ENCODE measurements at regions of chr13 and their contacts with region 1.

Region 1: DNA sequence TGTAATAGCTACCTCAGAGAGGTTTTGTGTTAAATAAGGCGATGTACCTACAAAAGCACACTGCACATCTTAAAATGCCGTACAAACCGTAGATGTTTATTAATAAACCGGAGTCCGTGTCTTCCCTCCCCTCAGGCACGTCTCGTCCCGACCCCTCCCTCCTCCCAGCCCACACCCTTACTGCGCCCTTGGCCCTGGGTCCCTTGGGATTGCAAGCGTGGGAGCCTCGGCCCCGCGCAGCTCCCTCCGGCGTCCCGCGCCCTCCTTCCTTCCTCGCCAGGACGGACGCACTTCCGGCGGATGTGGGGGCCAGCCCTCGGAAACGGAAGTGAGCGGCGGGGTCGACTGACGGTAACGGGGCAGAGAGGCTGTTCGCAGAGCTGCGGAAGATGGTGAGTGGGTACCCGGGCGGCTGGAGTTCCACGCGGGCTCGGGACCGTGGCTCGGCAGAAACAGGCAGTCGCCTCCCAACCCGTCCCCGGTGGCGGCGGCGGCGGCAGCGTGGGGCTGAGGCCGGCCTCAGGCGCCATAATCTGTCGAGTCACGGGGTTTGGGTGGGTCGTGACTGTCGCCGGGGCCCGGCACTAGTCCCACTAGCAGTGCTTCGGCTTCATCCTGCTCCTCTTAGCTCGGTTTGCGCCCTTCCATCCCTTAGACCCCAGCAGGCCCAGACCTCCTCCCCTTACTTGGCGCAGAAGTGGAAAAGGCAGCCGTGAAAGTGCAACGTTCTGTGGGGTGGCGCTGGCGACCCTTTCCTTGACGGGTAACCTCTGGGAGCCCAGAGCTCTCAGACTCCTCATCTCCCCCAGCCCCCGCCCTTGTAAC is at the start of gene POMP:
- DNase-seq: peak; percentile 90 to 94 (median 93)
- H3K4me3 ChIP-seq: peak within 1 kb of the TSS; percentile 76 to 93
- H3K4me3 Mint-ChIP-seq: peak within 1 kb of the TSS; percentile 95 to 99 (median 98)
- H3K27ac ChIP-seq: peak within 1 kb of the TSS; percentile 95
- H3K27ac Mint-ChIP-seq: peak within 1 kb of the TSS; percentile 96 to 100 (median 98)
- H3K4me1 ChIP-seq: peaks cover 40% of the 10 kb centered on the region
- H3K4me1 Mint-ChIP-seq: peaks cover 34 to 63% (median 54%) of the 10 kb centered on the region in 4 donors
- H3K27me3 ChIP-seq: no peaks in the 10 kb centered on the region
- H3K27me3 Mint-ChIP-seq: no peaks in the 10 kb centered on the region
- total RNA-seq, gene POMP: 23.0 to 24.5 TPM

Region 2: GRCh38 chr13:27251166-27252091 is 1407.6 kb before region 1 on chr13 and contains the start of gene RPL21:
- CTCF ChIA-PET with region 1: no interaction called
- POLR2A ChIA-PET with region 1: no interaction called
- intact Hi-C with region 1: loop called (anchors 1 kb)
- DNase-seq: peak; percentile 92 to 95 (median 93)
- H3K4me3 ChIP-seq: peak within 1 kb of the TSS; percentile 84 to 98
- H3K4me3 Mint-ChIP-seq: peak within 1 kb of the TSS; percentile 93 to 99 (median 96)
- H3K27ac ChIP-seq: peak within 1 kb of the TSS; percentile 99
- H3K27ac Mint-ChIP-seq: peak within 1 kb of the TSS; percentile 98 to 100 (median 100)
- H3K4me1 ChIP-seq: peaks cover 44% of the 10 kb centered on the region
- H3K4me1 Mint-ChIP-seq: peaks cover 34 to 74% (median 54%) of the 10 kb centered on the region in 4 donors
- H3K27me3 ChIP-seq: no peaks in the 10 kb centered on the region
- H3K27me3 Mint-ChIP-seq: no peaks in the 10 kb centered on the region
- total RNA-seq, gene RPL21: 2,008 to 2,177 TPM

Region 3: DNA sequence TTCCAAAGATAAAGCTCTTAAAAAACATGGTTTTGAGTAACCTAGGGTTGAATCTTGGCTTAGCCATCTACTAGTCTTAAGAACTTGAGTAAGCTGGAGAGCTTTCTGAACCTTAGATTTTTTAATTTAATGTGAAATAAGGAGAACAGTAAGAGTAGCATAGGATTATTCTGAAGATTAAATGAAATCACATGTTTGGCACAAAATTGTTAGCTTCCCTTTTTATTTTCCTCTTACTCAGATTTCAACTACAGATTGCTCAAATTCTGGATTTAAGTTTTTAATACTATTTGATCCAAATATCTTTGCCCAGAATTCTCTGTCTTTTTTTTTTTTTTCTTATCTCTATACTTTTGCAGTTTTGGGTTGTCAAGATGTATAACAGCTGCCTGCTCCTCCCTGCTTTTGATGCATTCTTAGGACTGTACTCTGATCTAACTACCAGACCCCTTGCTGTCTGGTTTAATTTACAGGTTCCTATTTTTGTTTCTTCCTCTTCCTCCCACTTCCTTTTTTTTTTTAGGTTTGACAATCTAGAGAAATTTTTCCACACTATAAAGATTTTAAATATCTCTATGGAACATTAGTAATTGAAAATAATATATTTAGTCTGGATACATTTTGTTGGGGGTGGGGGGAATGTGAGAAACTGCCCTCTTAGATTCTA is 12.3 kb after region 1 on chr13:
- CTCF ChIA-PET with region 1: interaction called, 3 read pairs
- POLR2A ChIA-PET with region 1: interaction called, 20 read pairs
- intact Hi-C with region 1: no loop called
- DNase-seq: no peak
- H3K4me3 ChIP-seq: no peak overlapping the region
- H3K4me3 Mint-ChIP-seq: no peak overlapping the region
- H3K27ac ChIP-seq: no peak overlapping the region
- H3K27ac Mint-ChIP-seq: peak overlapping the region in 5 of 7 donors; percentile 22 to 90 (median 77)
- H3K4me1 ChIP-seq: no peaks in the 10 kb centered on the region
- H3K4me1 Mint-ChIP-seq: peaks cover 4 to 9% (median 7%) of the 10 kb centered on the region in 4 donors
- H3K27me3 ChIP-seq: no peaks in the 10 kb centered on the region
- H3K27me3 Mint-ChIP-seq: no peaks in the 10 kb centered on the region

Region 4: GRCh38 chr13:28718543-28719226 is 59.7 kb after region 1 on chr13 and contains the start of gene SLC46A3:
- CTCF ChIA-PET with region 1: interaction called, 5 read pairs
- POLR2A ChIA-PET with region 1: interaction called, 41 read pairs
- intact Hi-C with region 1: loop called (anchors 1 kb)
- DNase-seq: peak; percentile 95 to 97 (median 96)
- H3K4me3 ChIP-seq: peak within 1 kb of the TSS; percentile 15 to 86
- H3K4me3 Mint-ChIP-seq: peak within 1 kb of the TSS; percentile 92 to 97 (median 94)
- H3K27ac ChIP-seq: peak within 1 kb of the TSS; percentile 65
- H3K27ac Mint-ChIP-seq: peak within 1 kb of the TSS; percentile 90 to 98 (median 95)
- H3K4me1 ChIP-seq: peaks cover 29% of the 10 kb centered on the region
- H3K4me1 Mint-ChIP-seq: peaks cover 23 to 47% (median 31%) of the 10 kb centered on the region in 4 donors
- H3K27me3 ChIP-seq: no peaks in the 10 kb centered on the region
- H3K27me3 Mint-ChIP-seq: no peaks in the 10 kb centered on the region
- total RNA-seq, gene SLC46A3: 18.7 to 18.9 TPM

Region 5: GRCh38 chr13:28792992-28793391 is 134.0 kb after region 1 on chr13:
- CTCF ChIA-PET with region 1: no interaction called
- POLR2A ChIA-PET with region 1: no interaction called
- intact Hi-C with region 1: loop called (anchors 10 kb)
- DNase-seq: no peak
- H3K4me3 ChIP-seq: no peak overlapping the region
- H3K4me3 Mint-ChIP-seq: no peak overlapping the region
- H3K27ac ChIP-seq: no peak overlapping the region
- H3K27ac Mint-ChIP-seq: no peak overlapping the region
- H3K4me1 ChIP-seq: no peaks in the 10 kb centered on the region
- H3K4me1 Mint-ChIP-seq: peaks cover 0 to 4% (median 0%) of the 10 kb centered on the region in 4 donors
- H3K27me3 ChIP-seq: no peaks in the 10 kb centered on the region
- H3K27me3 Mint-ChIP-seq: peaks cover 7 to 20% of the 10 kb centered on the region in 2 donors

Region 6: DNA sequence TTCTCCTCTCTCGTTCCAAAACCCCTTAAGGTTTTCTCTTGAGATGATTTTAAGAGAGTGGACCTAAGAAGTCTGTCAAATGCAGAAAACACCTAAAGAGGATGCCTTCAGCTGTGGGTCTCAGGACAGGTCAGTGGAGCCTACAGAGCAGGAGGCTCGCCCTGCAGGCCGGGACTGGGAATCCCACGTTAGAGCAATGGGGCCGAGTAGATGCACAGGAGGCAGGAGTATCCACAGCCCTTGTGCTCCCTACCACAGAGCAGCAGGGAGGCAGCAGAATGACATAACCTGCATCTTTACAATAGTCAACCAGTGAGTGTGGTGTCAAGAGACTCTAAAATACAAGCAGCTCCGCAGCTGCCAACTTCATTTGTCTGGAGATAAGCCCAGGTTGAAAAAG is 390.5 kb after region 1 on chr13:
- CTCF ChIA-PET with region 1: no interaction called
- POLR2A ChIA-PET with region 1: no interaction called
- intact Hi-C with region 1: no loop called
- DNase-seq: no peak
- H3K4me3 ChIP-seq: no peak overlapping the region
- H3K4me3 Mint-ChIP-seq: no peak overlapping the region
- H3K27ac ChIP-seq: no peak overlapping the region
- H3K27ac Mint-ChIP-seq: no peak overlapping the region
- H3K4me1 ChIP-seq: no peaks in the 10 kb centered on the region
- H3K4me1 Mint-ChIP-seq: no peaks in the 10 kb centered on the region
- H3K27me3 ChIP-seq: no peaks in the 10 kb centered on the region
- H3K27me3 Mint-ChIP-seq: no peaks in the 10 kb centered on the region

Region 7: DNA sequence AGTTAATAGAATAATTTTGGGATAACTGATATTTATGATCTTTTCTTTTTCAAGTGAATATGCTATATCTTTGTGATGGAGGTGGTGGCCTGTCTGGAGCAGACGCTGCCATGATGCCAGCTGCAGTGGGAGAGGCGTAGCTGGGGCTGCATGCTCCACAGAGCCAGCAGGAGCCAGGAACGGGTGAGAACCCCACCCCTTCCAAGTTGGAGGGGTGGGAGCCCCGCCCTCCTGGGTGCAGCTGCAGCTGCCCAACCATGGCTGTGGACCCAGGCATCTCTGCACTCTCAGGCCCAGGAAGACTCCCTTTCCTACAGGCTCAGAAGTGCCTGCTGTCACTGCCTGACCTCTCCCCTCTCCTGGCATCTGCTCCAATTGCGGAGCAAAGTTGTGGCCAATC is 563.5 kb after region 1 on chr13:
- CTCF ChIA-PET with region 1: no interaction called
- POLR2A ChIA-PET with region 1: no interaction called
- intact Hi-C with region 1: no loop called
- DNase-seq: no peak
- H3K4me3 ChIP-seq: no peak overlapping the region
- H3K4me3 Mint-ChIP-seq: no peak overlapping the region
- H3K27ac ChIP-seq: no peak overlapping the region
- H3K27ac Mint-ChIP-seq: no peak overlapping the region
- H3K4me1 ChIP-seq: no peaks in the 10 kb centered on the region
- H3K4me1 Mint-ChIP-seq: no peaks in the 10 kb centered on the region
- H3K27me3 ChIP-seq: no peaks in the 10 kb centered on the region
- H3K27me3 Mint-ChIP-seq: peaks cover 0 to 2% of the 10 kb centered on the region in 2 donors